GM23248 (cell line): ENCODE measurements at regions of chr12 and their contacts with region 1.

Region 1: GRCh38 chr12:7859552-7859951 is 13.2 kb downstream of the SLC2A14 start:
- DNase-seq: peak; percentile 87
- H3K4me3 ChIP-seq: peak overlapping the region; percentile 41
- H3K27ac ChIP-seq: peak overlapping the region; percentile 91
- H3K4me1 ChIP-seq: peaks cover 29% of the 10 kb centered on the region
- H3K27me3 ChIP-seq: no peaks in the 10 kb centered on the region

Region 2: DNA sequence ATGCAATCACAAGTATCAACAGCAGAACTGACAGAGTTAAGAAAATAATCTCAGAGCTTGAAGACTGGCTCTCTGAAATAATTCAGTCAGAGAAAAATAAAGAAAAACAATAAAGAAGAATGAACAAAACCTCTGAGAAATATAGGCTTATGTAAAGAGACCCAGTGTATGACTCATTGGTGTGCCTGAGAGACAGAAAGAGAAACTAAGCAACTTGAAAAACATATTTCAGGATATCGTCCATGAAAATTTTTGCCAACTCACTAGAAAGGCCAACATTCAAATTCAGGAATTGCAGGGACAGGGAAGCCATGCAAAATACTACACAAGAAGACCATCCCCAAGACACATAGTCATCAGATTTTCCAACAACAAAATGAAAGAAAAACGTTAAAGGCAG is 250.1 kb before region 1 on chr12:
- in situ Hi-C with region 1: no loop called
- DNase-seq: peak; percentile 66
- H3K4me3 ChIP-seq: peak overlapping the region; percentile 66
- H3K27ac ChIP-seq: peak overlapping the region; percentile 26
- H3K4me1 ChIP-seq: no peaks in the 10 kb centered on the region
- H3K27me3 ChIP-seq: peaks cover 6% of the 10 kb centered on the region; the same call in 1 of the 2 replicates

Region 3: DNA sequence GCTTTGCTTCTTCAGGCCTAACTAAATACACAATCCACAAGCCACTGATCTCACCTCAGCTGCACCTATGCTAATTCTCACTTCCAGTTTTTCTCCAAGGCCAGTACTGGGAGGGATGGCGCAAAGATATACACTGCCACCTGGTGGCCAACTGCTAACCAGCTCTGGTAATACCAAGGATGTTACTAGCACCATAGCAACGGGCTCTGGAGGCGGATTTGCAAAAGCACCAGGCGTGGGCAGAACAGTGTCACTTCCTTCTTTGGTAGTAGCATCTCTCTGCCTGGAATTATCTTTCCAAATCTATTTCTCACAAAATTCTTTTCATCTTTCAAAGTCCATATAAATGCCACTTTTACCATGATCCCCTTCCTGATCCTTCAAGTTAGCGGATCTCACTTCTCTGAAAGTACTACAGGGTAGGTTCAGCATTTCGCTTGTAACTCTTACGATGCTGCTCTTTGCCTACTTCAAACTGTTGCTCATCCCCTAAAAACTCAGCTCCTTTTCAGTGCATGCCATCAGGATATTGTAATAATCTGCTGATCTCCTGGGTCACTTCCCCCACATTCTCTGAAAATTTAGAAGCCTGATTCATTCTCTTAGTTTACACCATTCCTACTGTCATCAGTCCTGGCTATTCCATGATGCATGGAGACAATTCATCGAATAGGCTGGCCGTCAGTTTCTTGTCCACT is 135.9 kb after region 1 on chr12:
- in situ Hi-C with region 1: loop called (anchors 10 kb)
- DNase-seq: peak; percentile 98
- H3K4me3 ChIP-seq: peak overlapping the region; percentile 50
- H3K27ac ChIP-seq: peak overlapping the region; percentile 93
- H3K4me1 ChIP-seq: peaks cover 21% of the 10 kb centered on the region
- H3K27me3 ChIP-seq: no peaks in the 10 kb centered on the region